ENCODE measurements at regions of chr3 and their contacts with region 1.

Region 1: GRCh38 chr3:111311709-111312235 is 230.2 kb upstream of the CD96 start:
- DNase-seq: no peak
- H3K4me3 Mint-ChIP-seq: peak overlapping the region; percentile 18
- H3K27ac Mint-ChIP-seq: peak overlapping the region; percentile 77
- H3K4me1 Mint-ChIP-seq: peaks cover 39% of the 10 kb centered on the region
- H3K27me3 Mint-ChIP-seq: no peaks in the 10 kb centered on the region

Region 2: GRCh38 chr3:111128884-111129283 is 182.9 kb before region 1 on chr3:
- intact Hi-C with region 1: no loop called
- DNase-seq: no peak
- H3K4me3 Mint-ChIP-seq: no peak overlapping the region
- H3K27ac Mint-ChIP-seq: no peak overlapping the region
- H3K4me1 Mint-ChIP-seq: no peaks in the 10 kb centered on the region
- H3K27me3 Mint-ChIP-seq: peaks cover 5% of the 10 kb centered on the region

Region 3: DNA sequence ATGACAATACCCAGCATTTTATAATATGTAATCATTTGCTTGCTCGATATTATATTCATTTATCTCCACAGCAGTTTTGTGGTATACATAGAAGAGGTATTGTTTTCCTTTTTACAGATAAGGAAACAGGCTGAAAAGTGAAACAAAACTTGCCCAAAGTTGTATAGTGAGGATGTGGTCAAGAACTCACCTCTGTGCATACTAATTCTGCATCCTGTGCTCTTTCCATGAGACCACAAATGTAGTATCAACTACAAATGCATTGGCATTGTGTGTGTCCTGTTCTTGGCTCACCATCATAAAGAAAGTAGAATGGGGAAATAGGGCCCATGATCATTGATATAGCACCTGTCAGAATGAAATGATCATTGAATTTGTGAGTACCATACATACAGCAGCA is 72.9 kb before region 1 on chr3:
- intact Hi-C with region 1: loop called (anchors 1 kb)
- DNase-seq: peak; percentile 40
- H3K4me3 Mint-ChIP-seq: no peak overlapping the region
- H3K27ac Mint-ChIP-seq: no peak overlapping the region
- H3K4me1 Mint-ChIP-seq: peaks cover 26% of the 10 kb centered on the region
- H3K27me3 Mint-ChIP-seq: peaks cover 6% of the 10 kb centered on the region

Measured in activated T-helper 2 cell treated with anti-CD3 and anti-CD28 coated beads, Interferon-gamma antibody, Interleukin-2, Interleukin-4, amounts not matched to agents 10 μg/mL and 5 μg/mL and 100 μg/mL, durations not matched to agents 14 hours and 24 hours and 36 hours (primary cell).